ENCODE measurements at regions of chr3 and their contacts with region 1.

Region 1: DNA sequence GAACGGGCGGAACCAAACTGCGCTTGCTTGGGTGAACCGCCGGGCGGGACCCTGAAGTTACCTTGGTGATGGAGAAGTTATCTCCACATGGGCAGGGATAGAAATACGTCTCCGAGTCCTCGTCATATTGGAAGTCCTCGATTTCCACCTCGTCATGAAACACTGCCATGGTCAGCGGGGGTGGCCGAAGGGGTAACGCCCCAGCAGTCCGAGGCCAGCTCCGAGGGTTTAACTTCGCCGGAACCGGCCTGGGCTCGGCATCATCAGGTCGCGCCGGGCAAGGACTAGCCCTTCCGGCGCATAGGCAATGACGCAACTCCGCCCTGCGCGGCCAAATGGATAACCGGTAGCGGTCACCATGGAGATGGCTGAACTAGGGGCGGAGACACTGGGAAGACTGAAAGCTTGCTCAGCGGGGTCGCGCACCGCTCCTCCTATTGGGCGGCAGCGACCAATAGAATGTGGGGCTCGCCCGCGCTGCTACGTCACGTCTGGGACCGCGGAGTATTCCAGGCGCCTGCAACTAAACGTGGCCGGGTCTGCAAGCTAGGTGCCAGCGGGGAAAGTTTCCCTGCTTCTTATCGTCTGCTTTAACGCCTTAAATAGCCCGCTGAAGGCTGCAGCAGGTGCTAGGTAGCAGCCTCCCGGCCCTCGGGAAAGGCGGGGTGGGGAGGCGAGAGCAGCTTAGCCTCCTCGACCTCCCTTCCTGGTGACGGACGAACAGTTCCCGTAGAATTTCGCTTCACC is at the starts of genes DPH3 and OXNAD1:
- DNase-seq: peak; percentile 99
- ATAC-seq: peak; percentile 98
- H3K4me3 Mint-ChIP-seq: peak within 1 kb of the TSS; percentile 92
- H3K27ac Mint-ChIP-seq: peak within 1 kb of the TSS; percentile 98
- H3K4me1 Mint-ChIP-seq: peaks cover 30% of the 10 kb centered on the region
- H3K27me3 Mint-ChIP-seq: no peaks in the 10 kb centered on the region
- CTCF ChIP-seq: no peak
- total RNA-seq, gene DPH3: 18.2 to 19.9 TPM
- total RNA-seq, gene OXNAD1: 37.0 to 38.8 TPM

Region 2: DNA sequence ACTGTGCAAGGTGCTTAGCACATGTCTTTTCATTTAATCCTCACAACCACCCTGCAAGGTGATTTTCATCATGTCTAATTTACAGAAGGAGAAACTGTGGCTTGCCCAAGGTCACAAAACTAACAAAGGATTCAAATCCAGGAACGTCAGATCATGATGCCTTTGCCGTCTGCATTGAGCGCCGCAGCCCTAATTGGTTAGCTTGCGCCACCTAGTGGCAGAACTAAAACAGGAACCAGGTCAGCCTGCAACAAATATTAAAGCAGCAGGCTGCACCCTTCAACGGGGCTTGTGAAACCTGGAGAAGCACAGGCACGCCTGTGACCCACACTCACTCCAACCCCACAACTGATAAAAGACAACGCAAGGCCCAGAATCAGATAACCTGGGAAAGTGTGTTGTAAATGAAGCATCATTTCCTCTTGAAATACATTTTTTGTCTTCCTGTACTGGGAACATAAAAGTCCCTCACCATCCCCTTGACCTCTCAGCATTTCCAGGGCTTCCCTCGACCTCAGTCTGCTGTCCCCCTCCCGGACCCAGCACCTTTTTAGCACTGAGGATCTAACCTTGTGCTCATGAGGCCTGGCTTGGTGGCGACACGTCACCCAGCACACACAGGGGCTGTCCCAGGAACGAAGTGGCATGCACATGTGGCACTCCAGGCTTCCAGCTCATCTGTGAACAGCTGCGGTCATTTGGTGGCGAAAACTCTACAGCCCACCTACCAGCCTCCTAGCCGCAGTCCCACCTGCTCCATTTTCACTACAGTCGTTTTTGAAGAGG is 17.4 kb before region 1 on chr3:
- CTCF ChIA-PET with region 1: interaction called, 19 read pairs
- POLR2A ChIA-PET with region 1: interaction called, 20 read pairs
- intact Hi-C with region 1: no loop called
- DNase-seq: peak; percentile 88
- ATAC-seq: peak; percentile 90
- H3K4me3 Mint-ChIP-seq: no peak overlapping the region
- H3K27ac Mint-ChIP-seq: peak overlapping the region; percentile 77
- H3K4me1 Mint-ChIP-seq: peaks cover 7% of the 10 kb centered on the region
- H3K27me3 Mint-ChIP-seq: no peaks in the 10 kb centered on the region
- CTCF ChIP-seq: peak; percentile 95

Region 3: GRCh38 chr3:16253601-16254000 is 11.3 kb before region 1 on chr3:
- CTCF ChIA-PET with region 1: interaction called, 19 read pairs
- POLR2A ChIA-PET with region 1: interaction called, 20 read pairs
- intact Hi-C with region 1: no loop called
- DNase-seq: no peak
- ATAC-seq: no peak
- H3K4me3 Mint-ChIP-seq: no peak overlapping the region
- H3K27ac Mint-ChIP-seq: no peak overlapping the region
- H3K4me1 Mint-ChIP-seq: peaks cover 15% of the 10 kb centered on the region
- H3K27me3 Mint-ChIP-seq: no peaks in the 10 kb centered on the region
- CTCF ChIP-seq: no peak

Region 4: DNA sequence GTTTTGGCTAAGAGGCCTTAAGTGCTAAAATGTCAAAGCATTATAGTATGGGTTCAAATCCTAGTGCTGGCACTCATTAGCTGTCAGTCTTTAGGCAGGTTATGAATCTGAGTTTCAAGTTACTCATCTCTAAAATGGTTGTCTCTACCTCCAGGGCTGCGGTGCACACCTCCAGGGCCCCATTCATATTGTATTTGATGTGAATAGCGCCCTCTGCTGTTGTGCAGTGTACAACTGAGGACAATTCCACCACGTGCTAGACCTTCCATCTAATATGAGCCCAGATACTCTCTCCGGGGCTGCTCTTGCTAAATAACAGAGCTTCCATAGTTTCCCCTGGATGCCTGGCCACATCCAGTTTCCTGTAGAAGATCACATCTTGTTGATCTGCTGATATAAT is 54.4 kb after region 1 on chr3:
- CTCF ChIA-PET with region 1: interaction called, 121 read pairs
- POLR2A ChIA-PET with region 1: interaction called, 7 read pairs
- intact Hi-C with region 1: loop called (anchors 2 kb)
- DNase-seq: peak; percentile 97
- ATAC-seq: peak; percentile 92
- H3K4me3 Mint-ChIP-seq: peak overlapping the region; percentile 21
- H3K27ac Mint-ChIP-seq: peak overlapping the region; percentile 96
- H3K4me1 Mint-ChIP-seq: peaks cover 78% of the 10 kb centered on the region
- H3K27me3 Mint-ChIP-seq: no peaks in the 10 kb centered on the region
- CTCF ChIP-seq: peak; percentile 69

Region 5: GRCh38 chr3:16550676-16551341 is 285.9 kb after region 1 on chr3:
- CTCF ChIA-PET with region 1: interaction called, 15 read pairs
- POLR2A ChIA-PET with region 1: interaction called, 11 read pairs
- intact Hi-C with region 1: loop called (anchors 2 kb)
- DNase-seq: peak; percentile 87
- ATAC-seq: peak; percentile 100
- H3K4me3 Mint-ChIP-seq: no peak overlapping the region
- H3K27ac Mint-ChIP-seq: peak overlapping the region; percentile 95
- H3K4me1 Mint-ChIP-seq: peaks cover 23% of the 10 kb centered on the region
- H3K27me3 Mint-ChIP-seq: peaks cover 5% of the 10 kb centered on the region
- CTCF ChIP-seq: peak; percentile 94